Transverse colon (tissue), 4 donors: ENCODE measurements at regions of chr5 and their contacts with region 1.

Region 1: GRCh38 chr5:67268231-67269021 is 71.8 kb upstream of the CD180 start:
- DNase-seq: peak; percentile 75
- H3K4me3 ChIP-seq: peak overlapping the region in 1 of 4 donors; percentile 3
- H3K27ac ChIP-seq: peak overlapping the region; percentile 87 to 94 (median 91)
- H3K4me1 ChIP-seq: peaks cover 24 to 61% (median 41%) of the 10 kb centered on the region in 4 donors
- H3K27me3 ChIP-seq: no peaks in the 10 kb centered on the region
- CTCF ChIP-seq: no peak
- EP300 ChIP-seq: peak; percentile 94
- POLR2A ChIP-seq: no peak

Region 2: GRCh38 chr5:66680739-66681138 is 587.7 kb before region 1 on chr5:
- in situ Hi-C with region 1: no loop called
- intact Hi-C with region 1: no loop called
- DNase-seq: no peak
- H3K4me3 ChIP-seq: no peak overlapping the region
- H3K27ac ChIP-seq: no peak overlapping the region
- H3K4me1 ChIP-seq: peaks cover 0 to 11% (median 1%) of the 10 kb centered on the region in 4 donors
- H3K27me3 ChIP-seq: no peaks in the 10 kb centered on the region
- CTCF ChIP-seq: peak in 1 of 5 experiments; percentile 5
- EP300 ChIP-seq: no peak
- POLR2A ChIP-seq: no peak

Region 3: GRCh38 chr5:67941614-67942401 is 673.4 kb after region 1 on chr5:
- in situ Hi-C with region 1: no loop called
- intact Hi-C with region 1: loop called (anchors 5 kb)
- DNase-seq: no peak
- H3K4me3 ChIP-seq: no peak overlapping the region
- H3K27ac ChIP-seq: peak overlapping the region in 2 of 4 donors; percentile 38 to 41
- H3K4me1 ChIP-seq: peaks cover 0 to 6% (median 0%) of the 10 kb centered on the region in 4 donors
- H3K27me3 ChIP-seq: no peaks in the 10 kb centered on the region
- CTCF ChIP-seq: no peak
- EP300 ChIP-seq: no peak
- POLR2A ChIP-seq: no peak

Region 4: GRCh38 chr5:68252673-68253623 is 984.5 kb after region 1 on chr5:
- in situ Hi-C with region 1: loop called in 1 of 4 experiments (anchors 10 kb)
- intact Hi-C with region 1: no loop called
- DNase-seq: peak; percentile 60
- H3K4me3 ChIP-seq: no peak overlapping the region
- H3K27ac ChIP-seq: peak overlapping the region; percentile 65 to 77 (median 71)
- H3K4me1 ChIP-seq: peaks cover 34 to 97% (median 77%) of the 10 kb centered on the region in 4 donors
- H3K27me3 ChIP-seq: no peaks in the 10 kb centered on the region
- CTCF ChIP-seq: peak; percentile 57 to 84 (median 67)
- EP300 ChIP-seq: no peak
- POLR2A ChIP-seq: no peak